Panc1 (cell line): ENCODE measurements at regions of chr20 and their contacts with region 1.

Region 1: DNA sequence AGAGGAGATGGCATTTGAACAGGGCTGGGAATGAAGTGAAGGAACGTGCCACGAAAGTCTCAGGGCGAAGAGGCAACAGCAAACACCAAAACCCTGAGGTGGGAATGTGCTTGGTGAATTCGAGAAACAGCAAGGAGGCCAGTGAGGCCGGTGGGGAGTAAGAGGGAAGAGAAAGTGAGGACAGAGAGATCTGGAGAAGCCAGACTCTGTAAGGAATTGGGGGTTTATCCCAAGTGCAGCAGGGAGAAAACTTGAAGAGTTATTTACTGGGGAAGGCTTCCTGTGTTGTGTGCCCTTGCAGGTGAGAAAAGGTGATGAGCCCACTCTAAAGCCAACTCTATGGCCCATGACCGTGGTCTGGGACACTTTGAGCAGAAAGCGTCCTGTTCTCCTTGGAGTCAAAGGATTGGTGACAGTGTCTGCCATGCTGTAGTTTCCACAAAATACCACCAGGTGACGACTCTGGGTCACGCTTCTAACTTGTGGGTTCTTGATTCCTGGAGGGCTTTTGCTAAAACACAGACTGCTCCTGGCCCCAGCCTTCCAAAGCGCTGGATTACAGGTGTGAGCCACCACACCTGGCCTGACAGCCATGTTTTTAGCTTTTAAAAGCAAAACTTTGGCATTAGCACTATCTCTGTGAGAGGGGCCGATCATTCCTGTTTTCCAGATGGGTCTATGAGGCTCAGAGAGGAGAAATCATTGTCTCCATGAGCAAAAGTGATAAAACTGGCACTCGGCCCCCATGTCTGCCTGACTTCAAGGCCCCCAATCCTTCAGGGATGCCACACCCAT is 18.0 kb upstream of the CSNK2A1 start:
- DNase-seq: peak; percentile 80
- ATAC-seq: peak; percentile 94
- H3K4me3 ChIP-seq: no peak overlapping the region
- H3K27ac ChIP-seq: no peak overlapping the region
- H3K4me1 ChIP-seq: no peaks in the 10 kb centered on the region
- H3K27me3 ChIP-seq: no peaks in the 10 kb centered on the region
- CTCF ChIP-seq: peak; percentile 99

Region 2: GRCh38 chr20:645318-646106 is 83.9 kb after region 1 on chr20:
- CTCF ChIA-PET with region 1: interaction called, 20 read pairs
- POLR2A ChIA-PET with region 1: no interaction called
- in situ Hi-C with region 1: no loop called
- intact Hi-C with region 1: loop called (anchors 2 kb)
- DNase-seq: peak; percentile 62
- ATAC-seq: peak; percentile 88
- H3K4me3 ChIP-seq: no peak overlapping the region
- H3K27ac ChIP-seq: no peak overlapping the region
- H3K4me1 ChIP-seq: peaks cover 9% of the 10 kb centered on the region
- H3K27me3 ChIP-seq: no peaks in the 10 kb centered on the region
- CTCF ChIP-seq: peak; percentile 98

Region 3: DNA sequence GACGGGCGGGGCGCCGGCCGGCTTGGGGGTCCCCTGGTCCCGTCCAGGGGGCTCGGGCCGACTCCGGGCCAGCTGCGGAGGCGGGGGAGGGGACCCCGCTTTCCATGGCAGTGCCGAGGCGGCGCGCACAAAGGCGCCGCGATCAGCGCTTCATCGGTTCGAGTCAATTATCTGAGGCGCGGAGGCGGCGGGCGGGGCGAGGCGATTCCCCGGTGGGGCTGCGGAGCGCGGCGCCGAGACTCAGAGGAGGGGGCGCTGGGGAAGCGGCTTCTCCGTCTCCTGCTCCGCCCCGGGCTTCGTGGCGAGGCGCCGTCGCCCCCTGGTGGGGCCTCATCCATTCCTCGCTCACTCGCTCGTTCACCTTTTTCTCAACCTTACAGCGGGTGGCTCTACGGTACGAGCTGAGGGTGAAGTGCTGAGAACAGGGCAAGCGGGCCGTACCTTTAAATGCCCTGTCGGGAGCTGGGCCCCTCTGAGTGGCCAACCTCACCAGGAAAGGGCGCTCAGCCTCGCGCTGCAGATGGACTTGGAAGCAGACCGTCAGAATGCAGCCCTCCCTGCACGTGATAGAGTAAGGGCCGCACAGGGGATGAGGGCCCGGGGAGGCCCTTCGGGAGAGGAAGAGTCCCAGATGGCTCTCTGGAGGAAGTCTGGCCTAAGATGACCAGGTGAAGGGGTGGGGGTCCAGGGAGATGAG is 166.8 kb after region 1 on chr20:
- CTCF ChIA-PET with region 1: interaction called, 3 read pairs
- POLR2A ChIA-PET with region 1: no interaction called
- in situ Hi-C with region 1: no loop called
- intact Hi-C with region 1: loop called (anchors 1 kb)
- DNase-seq: peak; percentile 17
- ATAC-seq: peak; percentile 96
- H3K4me3 ChIP-seq: peak overlapping the region; percentile 48 to 54
- H3K27ac ChIP-seq: no peak overlapping the region
- H3K4me1 ChIP-seq: no peaks in the 10 kb centered on the region
- H3K27me3 ChIP-seq: peaks cover 3% of the 10 kb centered on the region
- CTCF ChIP-seq: peak; percentile 94

Region 4: DNA sequence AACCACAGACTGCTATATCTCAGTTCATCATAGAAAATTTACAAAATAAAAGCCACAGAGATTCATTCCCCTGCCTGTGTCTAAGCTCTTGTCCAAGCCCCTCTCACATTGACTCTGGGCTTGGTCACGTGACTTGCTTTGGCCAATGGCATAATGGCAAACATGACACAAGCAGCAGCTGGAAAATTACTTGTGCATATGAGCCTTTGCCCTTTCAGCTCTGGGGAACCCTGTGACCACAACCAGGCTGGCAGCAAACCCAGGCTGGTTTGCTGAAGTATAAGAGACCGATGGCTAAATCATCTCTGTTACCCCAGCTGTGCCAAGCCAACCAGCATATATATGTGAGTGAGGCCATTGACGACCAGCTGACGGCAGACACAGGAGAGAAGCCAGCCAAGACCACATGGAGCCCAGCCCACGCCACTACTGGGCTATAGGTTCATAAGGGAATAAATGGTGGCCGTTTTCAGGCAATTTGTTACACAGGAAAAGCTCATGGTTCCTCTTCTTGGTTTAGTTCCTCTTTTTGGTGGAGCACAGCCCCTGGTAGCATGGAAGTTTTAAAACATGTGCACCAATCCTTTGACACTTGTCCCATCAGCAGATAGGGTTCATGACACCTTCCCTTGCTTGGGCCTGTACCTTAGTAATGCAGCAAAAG is 472.2 kb after region 1 on chr20:
- CTCF ChIA-PET with region 1: no interaction called
- POLR2A ChIA-PET with region 1: no interaction called
- in situ Hi-C with region 1: no loop called
- intact Hi-C with region 1: no loop called
- DNase-seq: no peak
- ATAC-seq: no peak
- H3K4me3 ChIP-seq: no peak overlapping the region
- H3K27ac ChIP-seq: no peak overlapping the region
- H3K4me1 ChIP-seq: no peaks in the 10 kb centered on the region
- H3K27me3 ChIP-seq: no peaks in the 10 kb centered on the region; the same call in 1 of the 2 replicates
- CTCF ChIP-seq: no peak